ENCODE measurements at regions of chr21 and their contacts with region 1.

Region 1: DNA sequence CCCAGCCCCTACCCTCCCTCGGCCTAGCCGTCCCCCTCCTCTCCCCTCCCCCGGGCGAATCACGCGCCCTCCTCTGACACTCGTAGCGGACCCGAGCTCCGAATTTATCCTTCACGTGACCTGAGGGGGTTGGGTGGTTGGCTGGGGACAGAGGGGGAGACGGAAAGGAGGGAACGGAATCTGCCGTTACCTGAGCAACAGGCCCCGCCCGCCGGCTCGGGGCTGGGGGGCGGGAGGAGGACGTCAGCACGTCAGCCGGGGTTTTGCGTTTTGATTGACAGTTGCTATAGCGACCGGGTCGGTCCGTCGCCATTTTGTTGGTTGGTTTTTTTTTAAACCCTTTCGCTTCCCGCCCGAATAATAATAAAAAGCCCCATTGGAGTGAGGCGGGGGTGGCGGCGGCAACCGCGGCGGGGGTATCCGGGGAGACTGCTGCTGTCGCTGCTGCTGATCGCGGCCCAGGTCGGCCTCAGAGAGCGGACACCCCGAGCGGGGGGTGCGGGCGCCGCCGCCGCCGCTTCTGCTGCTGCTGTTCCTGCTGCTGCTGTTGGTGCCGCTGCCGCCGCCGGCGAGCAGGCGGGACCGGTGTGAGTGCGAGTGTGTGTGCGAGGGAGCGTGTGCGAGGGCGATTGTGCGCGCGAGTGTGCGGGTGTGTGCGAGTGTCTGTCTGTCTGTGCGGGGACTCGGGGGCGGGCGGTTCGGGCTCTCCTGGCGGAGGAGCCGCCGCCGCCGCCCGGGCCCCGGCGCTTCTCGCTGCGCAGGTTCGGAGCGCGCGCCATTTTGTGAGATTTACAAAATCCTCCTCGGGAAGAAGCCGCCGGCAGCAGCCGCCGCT is at the start of gene DYRK1A:
- DNase-seq: peak; percentile 97
- ATAC-seq: peak; percentile 82
- H3K4me3 Mint-ChIP-seq: peak within 1 kb of the TSS; percentile 99
- H3K27ac Mint-ChIP-seq: peak within 1 kb of the TSS; percentile 99
- H3K4me1 Mint-ChIP-seq: peaks cover 52% of the 10 kb centered on the region
- H3K27me3 Mint-ChIP-seq: no peaks in the 10 kb centered on the region
- CTCF ChIP-seq: no peak
- total RNA-seq, gene DYRK1A: 93.4 and 99.9 TPM in 2 replicates

Region 2: GRCh38 chr21:36551731-36552433 is 814.8 kb before region 1 on chr21:
- CTCF ChIA-PET with region 1: no interaction called
- POLR2A ChIA-PET with region 1: no interaction called
- intact Hi-C with region 1: no loop called
- DNase-seq: no peak
- ATAC-seq: no peak
- H3K4me3 Mint-ChIP-seq: no peak overlapping the region
- H3K27ac Mint-ChIP-seq: no peak overlapping the region
- H3K4me1 Mint-ChIP-seq: no peaks in the 10 kb centered on the region
- H3K27me3 Mint-ChIP-seq: peaks cover 5% of the 10 kb centered on the region
- CTCF ChIP-seq: no peak

Region 3: GRCh38 chr21:36966066-36966820 is 400.5 kb before region 1 on chr21 and contains the start of gene HLCS:
- CTCF ChIA-PET with region 1: no interaction called
- POLR2A ChIA-PET with region 1: no interaction called
- intact Hi-C with region 1: loop called (anchors 5 kb)
- DNase-seq: peak; percentile 77
- ATAC-seq: peak; percentile 92
- H3K4me3 Mint-ChIP-seq: peak within 1 kb of the TSS; percentile 85
- H3K27ac Mint-ChIP-seq: peak within 1 kb of the TSS; percentile 80
- H3K4me1 Mint-ChIP-seq: peaks cover 20% of the 10 kb centered on the region
- H3K27me3 Mint-ChIP-seq: no peaks in the 10 kb centered on the region
- CTCF ChIP-seq: no peak
- total RNA-seq, gene HLCS: 8.1 and 10.6 TPM in 2 replicates

Region 4: GRCh38 chr21:37009740-37010341 is 356.9 kb before region 1 on chr21:
- CTCF ChIA-PET with region 1: no interaction called
- POLR2A ChIA-PET with region 1: no interaction called
- intact Hi-C with region 1: no loop called
- DNase-seq: peak; percentile 62
- ATAC-seq: peak; percentile 85
- H3K4me3 Mint-ChIP-seq: peak overlapping the region; percentile 39
- H3K27ac Mint-ChIP-seq: no peak overlapping the region
- H3K4me1 Mint-ChIP-seq: peaks cover 19% of the 10 kb centered on the region
- H3K27me3 Mint-ChIP-seq: peaks cover 46% of the 10 kb centered on the region
- CTCF ChIP-seq: no peak

Region 5: GRCh38 chr21:37208056-37208721 is 158.5 kb before region 1 on chr21:
- CTCF ChIA-PET with region 1: no interaction called
- POLR2A ChIA-PET with region 1: interaction called, 19 read pairs
- intact Hi-C with region 1: loop called (anchors 2 kb)
- DNase-seq: peak; percentile 47
- ATAC-seq: peak; percentile 65
- H3K4me3 Mint-ChIP-seq: peak overlapping the region; percentile 77
- H3K27ac Mint-ChIP-seq: peak overlapping the region; percentile 84
- H3K4me1 Mint-ChIP-seq: peaks cover 45% of the 10 kb centered on the region
- H3K27me3 Mint-ChIP-seq: no peaks in the 10 kb centered on the region
- CTCF ChIP-seq: no peak

Region 6: DNA sequence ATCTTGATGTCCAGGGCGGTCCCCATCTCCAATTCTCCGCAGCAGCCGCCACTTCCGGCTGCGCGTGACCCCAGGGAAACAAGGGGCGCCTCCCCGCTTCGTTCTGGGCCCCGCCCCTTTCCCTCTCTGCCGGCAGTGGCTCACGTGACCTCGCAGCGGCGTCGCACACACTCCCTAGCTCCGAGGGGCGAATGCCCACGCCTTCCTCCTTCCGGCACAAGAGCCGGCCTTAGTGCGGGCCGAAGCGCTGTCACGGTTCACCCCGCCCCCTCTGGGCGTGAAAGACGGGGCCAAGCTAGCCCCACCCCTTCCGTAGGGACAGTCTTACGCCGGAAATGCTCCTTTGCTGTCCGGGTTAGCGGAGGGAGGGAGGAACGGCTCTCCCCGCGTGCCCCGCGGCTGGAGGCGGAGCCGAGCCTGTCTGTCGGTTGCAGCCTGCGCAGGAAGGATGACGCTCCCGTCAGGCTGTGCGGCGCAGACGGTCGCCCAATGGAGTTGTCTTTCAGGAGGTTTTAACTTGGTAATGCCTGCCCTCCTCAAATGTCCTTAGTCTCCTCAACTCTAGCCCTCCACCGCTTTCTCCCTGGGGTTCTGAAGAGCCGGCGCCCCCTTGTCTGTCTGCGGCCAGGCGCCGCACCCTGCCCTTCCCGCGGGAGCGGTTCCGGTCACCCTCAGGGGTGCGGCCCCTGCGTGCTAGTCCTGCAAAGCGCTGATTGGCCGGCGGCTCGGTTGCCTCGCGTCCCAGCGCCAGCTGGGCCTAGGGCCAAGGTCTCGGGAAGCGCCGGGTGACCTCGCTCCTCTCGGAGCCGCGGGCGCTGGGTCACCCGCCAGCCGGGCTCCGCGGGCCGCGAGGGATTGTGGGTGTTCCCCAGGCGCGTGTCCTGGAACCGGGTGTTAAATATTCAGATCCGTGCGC is 99.2 kb before region 1 on chr21 and contains the start of gene VPS26C:
- CTCF ChIA-PET with region 1: interaction called, 3 read pairs
- POLR2A ChIA-PET with region 1: interaction called, 82 read pairs
- intact Hi-C with region 1: loop called (anchors 1 kb)
- DNase-seq: peak; percentile 94
- ATAC-seq: peak; percentile 86
- H3K4me3 Mint-ChIP-seq: peak within 1 kb of the TSS; percentile 96
- H3K27ac Mint-ChIP-seq: peak within 1 kb of the TSS; percentile 97
- H3K4me1 Mint-ChIP-seq: peaks cover 29% of the 10 kb centered on the region
- H3K27me3 Mint-ChIP-seq: peaks cover 6% of the 10 kb centered on the region
- CTCF ChIP-seq: no peak
- total RNA-seq, gene VPS26C: 42.5 and 45.2 TPM in 2 replicates

Region 7: GRCh38 chr21:37297364-37297763 is 69.3 kb before region 1 on chr21:
- CTCF ChIA-PET with region 1: no interaction called
- POLR2A ChIA-PET with region 1: no interaction called
- intact Hi-C with region 1: no loop called
- DNase-seq: no peak
- ATAC-seq: no peak
- H3K4me3 Mint-ChIP-seq: no peak overlapping the region
- H3K27ac Mint-ChIP-seq: no peak overlapping the region
- H3K4me1 Mint-ChIP-seq: no peaks in the 10 kb centered on the region
- H3K27me3 Mint-ChIP-seq: peaks cover 7% of the 10 kb centered on the region
- CTCF ChIP-seq: no peak

Region 8: DNA sequence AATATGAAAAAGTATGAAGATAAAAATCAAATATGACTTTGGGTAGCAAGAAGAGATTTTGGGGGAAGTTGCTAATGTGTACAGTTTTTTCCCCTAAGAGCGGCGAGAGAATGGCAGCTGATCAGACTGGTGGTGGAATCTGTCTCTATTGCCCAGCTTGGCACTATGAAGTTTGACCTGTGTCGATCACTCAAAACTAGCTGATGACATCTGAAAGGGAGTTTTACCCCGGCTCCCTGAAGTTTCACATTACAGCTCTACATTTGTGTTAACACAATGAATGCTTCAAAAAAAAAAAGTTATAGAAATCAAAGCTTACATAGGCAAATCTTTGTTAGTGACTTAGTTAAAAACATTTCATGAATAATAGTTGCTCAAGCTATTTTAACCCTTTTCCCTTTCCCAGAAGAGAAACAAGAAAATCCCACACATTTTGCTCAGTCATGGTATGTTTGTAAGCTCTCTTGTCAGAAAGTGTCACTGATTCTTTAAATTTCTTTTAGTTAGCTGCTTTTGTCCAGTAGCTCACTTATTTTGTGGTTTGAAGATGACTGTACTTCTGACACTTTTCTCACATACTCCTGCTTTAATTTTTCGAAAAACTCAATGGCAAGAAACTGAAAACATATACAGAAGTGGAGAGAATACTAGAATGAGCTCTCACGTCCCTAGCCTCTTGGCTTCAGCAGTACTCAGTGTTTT is 41.2 kb after region 1 on chr21:
- CTCF ChIA-PET with region 1: no interaction called
- POLR2A ChIA-PET with region 1: interaction called, 3 read pairs
- intact Hi-C with region 1: loop called (anchors 5 kb)
- DNase-seq: no peak
- ATAC-seq: no peak
- H3K4me3 Mint-ChIP-seq: no peak overlapping the region
- H3K27ac Mint-ChIP-seq: no peak overlapping the region
- H3K4me1 Mint-ChIP-seq: peaks cover 85% of the 10 kb centered on the region
- H3K27me3 Mint-ChIP-seq: no peaks in the 10 kb centered on the region
- CTCF ChIP-seq: no peak

Region 9: GRCh38 chr21:37463083-37463801 is 96.5 kb after region 1 on chr21:
- CTCF ChIA-PET with region 1: interaction called, 3 read pairs
- POLR2A ChIA-PET with region 1: interaction called, 4 read pairs
- intact Hi-C with region 1: loop called (anchors 2 kb)
- DNase-seq: no peak
- ATAC-seq: peak; percentile 76
- H3K4me3 Mint-ChIP-seq: peak overlapping the region; percentile 1
- H3K27ac Mint-ChIP-seq: peak overlapping the region; percentile 73
- H3K4me1 Mint-ChIP-seq: peaks cover 92% of the 10 kb centered on the region
- H3K27me3 Mint-ChIP-seq: no peaks in the 10 kb centered on the region
- CTCF ChIP-seq: no peak

Region 10: GRCh38 chr21:38766987-38767722 is 1400.5 kb after region 1 on chr21:
- CTCF ChIA-PET with region 1: no interaction called
- POLR2A ChIA-PET with region 1: no interaction called
- intact Hi-C with region 1: loop called (anchors 10 kb)
- DNase-seq: peak; percentile 23
- ATAC-seq: peak; percentile 96
- H3K4me3 Mint-ChIP-seq: peak overlapping the region; percentile 83
- H3K27ac Mint-ChIP-seq: peak overlapping the region; percentile 83
- H3K4me1 Mint-ChIP-seq: peaks cover 29% of the 10 kb centered on the region
- H3K27me3 Mint-ChIP-seq: peaks cover 29% of the 10 kb centered on the region
- CTCF ChIP-seq: no peak

Measured in activated B cell treated with CpG ODN at 0.5 μM for 24 hours (primary cell).